Mammary epithelial cell (primary cell): ENCODE measurements at regions of chr6 and their contacts with region 1.

Region 1: DNA sequence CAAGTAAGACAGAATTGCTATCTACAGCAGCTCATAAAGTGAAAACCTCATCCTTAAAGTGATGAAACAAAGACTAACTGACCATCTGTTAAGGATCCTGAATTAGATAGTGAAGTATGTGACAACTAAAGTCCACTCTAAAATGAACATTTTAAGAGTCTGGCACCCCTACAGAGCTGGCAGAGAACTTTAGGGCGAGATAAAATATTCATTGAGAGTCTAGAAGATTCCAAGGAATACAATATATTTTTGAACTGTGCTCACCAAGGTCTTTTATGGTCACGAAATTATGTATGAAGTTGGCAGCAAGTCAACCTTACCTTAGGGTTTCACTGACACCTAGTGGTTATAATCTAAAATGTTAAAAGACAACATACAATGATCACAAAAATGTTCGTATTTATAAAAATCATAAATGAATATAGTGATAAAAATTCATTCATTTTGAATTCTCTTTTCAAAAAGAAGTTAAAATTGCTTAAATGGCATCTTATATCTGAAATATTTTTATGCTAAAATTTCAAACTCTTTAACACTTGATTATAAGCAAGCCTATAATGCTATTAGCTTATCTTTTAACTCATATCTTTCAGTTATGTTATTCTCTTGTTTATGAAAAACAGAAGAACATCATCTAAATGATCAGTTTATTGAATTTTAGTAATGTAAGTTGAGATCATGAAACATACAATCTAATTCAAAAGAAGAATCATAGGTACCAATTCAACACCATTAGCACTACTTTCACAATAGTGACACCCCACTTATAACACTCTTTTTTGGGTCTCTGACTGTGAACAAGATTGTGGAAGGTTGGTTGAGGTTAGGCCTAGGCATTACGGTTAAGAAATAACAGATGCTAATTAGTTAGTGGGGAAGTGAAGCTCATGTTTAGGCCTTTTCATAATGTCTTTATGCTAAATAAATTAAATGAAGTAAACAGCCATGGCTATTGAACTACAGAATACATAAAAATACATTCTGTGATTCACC is 27.5 kb downstream of the RSPH3 start:
- DNase-seq: peak; percentile 50
- H3K4me3 ChIP-seq: no peak overlapping the region
- H3K27ac ChIP-seq: peak overlapping the region; percentile 49
- H3K4me1 ChIP-seq: no peaks in the 10 kb centered on the region
- H3K27me3 ChIP-seq: no peaks in the 10 kb centered on the region
- CTCF ChIP-seq: peak; percentile 39 to 43

Region 2: DNA sequence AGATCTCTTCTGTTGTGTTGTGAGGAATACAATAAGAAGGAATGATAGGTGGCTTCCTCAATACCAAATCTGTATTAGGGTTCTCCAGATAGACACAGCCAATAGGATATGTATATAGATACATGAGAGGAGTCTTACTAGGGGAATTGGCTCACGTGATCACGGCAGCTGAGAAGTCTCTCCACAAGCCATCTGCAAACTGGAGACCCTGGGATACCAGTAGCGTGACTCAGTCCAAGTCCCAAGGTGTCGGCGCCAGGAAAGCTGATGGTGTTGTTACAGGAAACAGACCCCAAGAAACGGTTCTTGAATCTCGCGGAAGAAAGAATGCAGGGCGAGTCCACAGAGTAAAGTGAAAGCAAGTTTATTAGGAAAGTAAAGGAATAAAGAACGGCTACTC is 261.3 kb before region 1 on chr6:
- CTCF ChIA-PET with region 1: no interaction called
- dilution Hi-C with region 1: loop called (anchors 5 kb)
- in situ Hi-C with region 1: loop called (anchors 5 kb)
- intact Hi-C with region 1: no loop called
- DNase-seq: no peak
- H3K4me3 ChIP-seq: no peak overlapping the region
- H3K27ac ChIP-seq: no peak overlapping the region
- H3K4me1 ChIP-seq: peaks cover 23% of the 10 kb centered on the region
- H3K27me3 ChIP-seq: no peaks in the 10 kb centered on the region
- CTCF ChIP-seq: no peak

Region 3: DNA sequence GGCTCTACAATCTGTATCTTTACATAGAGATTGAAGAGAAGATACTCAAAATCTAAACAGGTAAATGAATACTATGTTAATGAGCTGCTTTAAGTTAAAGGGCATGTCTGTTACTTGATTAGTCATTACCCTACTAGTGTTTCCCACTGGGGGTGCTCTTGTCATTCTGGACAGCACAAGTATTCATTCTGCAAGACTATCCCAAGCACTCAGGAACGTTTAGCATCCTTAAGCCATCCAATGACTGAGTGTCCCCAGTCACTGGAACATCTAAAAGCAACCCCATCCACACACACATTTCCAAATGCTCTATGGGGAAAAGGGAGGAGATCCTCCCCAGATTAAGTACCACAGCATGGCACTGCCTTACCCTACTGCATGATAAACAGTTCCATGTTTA is 179.1 kb before region 1 on chr6:
- CTCF ChIA-PET with region 1: no interaction called
- dilution Hi-C with region 1: no loop called
- in situ Hi-C with region 1: loop called (anchors 10 kb)
- intact Hi-C with region 1: loop called (anchors 1 kb)
- DNase-seq: no peak
- H3K4me3 ChIP-seq: no peak overlapping the region
- H3K27ac ChIP-seq: no peak overlapping the region
- H3K4me1 ChIP-seq: peaks cover 19% of the 10 kb centered on the region
- H3K27me3 ChIP-seq: no peaks in the 10 kb centered on the region
- CTCF ChIP-seq: peak; percentile 51 to 61

Region 4: DNA sequence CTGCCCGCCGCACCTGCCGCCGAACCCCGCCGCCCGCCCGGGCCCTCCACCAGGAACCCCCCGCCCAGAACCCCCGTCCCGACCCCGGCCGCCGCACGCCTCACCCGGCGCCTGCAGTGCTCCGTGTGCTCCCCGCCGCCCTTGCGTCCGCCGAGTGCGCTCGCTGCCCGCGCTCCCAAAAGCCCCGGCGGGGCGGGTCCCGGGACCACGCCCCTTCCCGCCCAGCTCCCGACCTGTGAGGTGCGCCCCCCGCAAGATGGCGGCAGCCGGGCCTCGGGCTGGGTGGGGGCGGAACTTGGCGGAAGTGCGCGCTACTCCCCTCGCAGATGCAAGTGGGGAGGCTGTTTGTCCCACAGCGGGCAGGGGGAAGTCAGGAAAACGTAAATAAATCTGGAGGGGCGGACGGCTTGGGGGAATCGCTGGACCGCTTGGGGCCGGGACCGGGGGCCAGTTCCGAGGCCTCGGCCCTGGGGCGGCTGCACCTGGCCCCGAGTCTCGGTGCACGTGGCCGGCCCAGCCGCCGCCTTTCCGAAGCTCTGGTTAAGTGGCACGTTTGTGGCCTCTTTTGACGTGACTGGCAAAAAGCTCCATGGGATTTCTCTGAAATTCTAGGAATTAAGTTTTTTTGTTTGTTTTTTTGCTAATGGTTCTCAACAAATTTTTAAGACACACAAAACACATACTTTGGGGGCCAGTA is 153.2 kb before region 1 on chr6 and contains the start of gene EZR:
- CTCF ChIA-PET with region 1: no interaction called
- dilution Hi-C with region 1: no loop called
- in situ Hi-C with region 1: no loop called
- intact Hi-C with region 1: loop called (anchors 1 kb)
- DNase-seq: peak; percentile 76
- H3K4me3 ChIP-seq: peak within 1 kb of the TSS; percentile 80 to 87 (median 80)
- H3K27ac ChIP-seq: peak within 1 kb of the TSS; percentile 96
- H3K4me1 ChIP-seq: peaks cover 21% of the 10 kb centered on the region
- H3K27me3 ChIP-seq: no peaks in the 10 kb centered on the region
- CTCF ChIP-seq: no peak
- total RNA-seq, gene EZR: 164 to 240 TPM

Region 5: DNA sequence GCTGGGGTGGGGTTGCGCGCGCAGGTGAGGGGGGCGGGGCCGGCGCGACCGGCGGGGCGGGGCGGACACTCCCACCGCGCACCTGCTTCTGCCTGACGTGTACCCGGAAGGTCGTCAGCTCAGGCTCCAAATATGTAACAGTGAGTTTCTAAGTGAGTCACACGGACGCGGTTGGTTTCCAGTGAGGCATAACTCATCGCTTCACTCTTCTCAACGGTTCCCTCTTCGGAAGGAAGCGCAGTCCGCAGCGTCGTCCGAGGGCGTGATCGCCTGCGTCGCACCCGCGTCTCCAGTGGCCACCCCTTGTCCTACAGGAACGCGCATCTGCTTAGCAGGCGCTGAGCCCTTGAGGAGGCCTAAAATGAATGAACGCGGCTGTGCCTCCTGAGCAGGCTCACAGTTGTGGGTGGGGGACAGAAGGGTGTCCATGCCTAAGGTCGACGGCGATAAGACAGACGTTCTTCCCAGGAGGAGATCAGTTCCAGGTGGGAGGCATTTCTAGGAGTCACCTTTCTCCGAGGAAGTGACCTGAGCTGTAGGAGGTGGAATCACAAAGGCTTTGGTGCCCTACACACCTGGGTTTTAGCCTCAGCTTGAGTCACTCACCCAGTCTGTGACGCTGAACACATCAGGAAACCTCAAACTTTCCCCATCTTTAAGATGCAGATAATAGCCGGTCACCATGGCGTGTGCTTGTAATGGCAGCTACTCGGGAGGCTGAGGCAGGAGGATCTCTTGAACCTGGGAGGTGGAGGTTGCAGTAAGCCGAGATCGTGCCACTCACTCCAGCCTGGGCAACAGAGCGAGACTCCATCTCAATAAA is 102.5 kb before region 1 on chr6:
- CTCF ChIA-PET with region 1: no interaction called
- dilution Hi-C with region 1: no loop called
- in situ Hi-C with region 1: no loop called
- intact Hi-C with region 1: loop called (anchors 1 kb)
- DNase-seq: peak; percentile 99
- H3K4me3 ChIP-seq: peak overlapping the region in 2 of 3 experiments; percentile 35 to 41
- H3K27ac ChIP-seq: peak overlapping the region; percentile 100
- H3K4me1 ChIP-seq: peaks cover 16% of the 10 kb centered on the region
- H3K27me3 ChIP-seq: no peaks in the 10 kb centered on the region
- CTCF ChIP-seq: peak in 1 of 2 donors; percentile 50

Region 6: DNA sequence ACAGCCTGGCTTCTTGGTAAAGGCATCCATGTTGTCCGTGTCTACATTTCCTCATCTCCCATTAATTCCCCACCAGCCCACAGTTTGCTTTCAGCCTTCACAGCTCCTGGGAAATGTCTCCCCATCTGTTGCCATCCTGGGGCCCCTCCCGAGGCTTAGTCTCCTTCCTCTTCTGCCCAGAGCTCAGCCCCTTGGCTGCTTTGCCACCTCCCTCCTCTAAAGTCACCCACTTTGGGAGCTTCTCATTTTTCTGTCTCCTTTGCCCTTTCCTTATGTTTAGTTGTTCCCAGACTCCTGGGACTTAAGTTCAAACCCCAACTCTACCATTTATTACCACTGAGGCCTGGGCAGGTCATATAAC is 60.4 kb before region 1 on chr6:
- CTCF ChIA-PET with region 1: no interaction called
- dilution Hi-C with region 1: no loop called
- in situ Hi-C with region 1: no loop called
- intact Hi-C with region 1: no loop called
- DNase-seq: no peak
- H3K4me3 ChIP-seq: no peak overlapping the region
- H3K27ac ChIP-seq: no peak overlapping the region
- H3K4me1 ChIP-seq: peaks cover 17% of the 10 kb centered on the region
- H3K27me3 ChIP-seq: no peaks in the 10 kb centered on the region
- CTCF ChIP-seq: no peak

Region 7: GRCh38 chr6:158938811-158939254 is 33.7 kb before region 1 on chr6:
- CTCF ChIA-PET with region 1: no interaction called
- dilution Hi-C with region 1: no loop called
- in situ Hi-C with region 1: no loop called
- intact Hi-C with region 1: no loop called
- DNase-seq: no peak
- H3K4me3 ChIP-seq: no peak overlapping the region
- H3K27ac ChIP-seq: no peak overlapping the region
- H3K4me1 ChIP-seq: no peaks in the 10 kb centered on the region
- H3K27me3 ChIP-seq: no peaks in the 10 kb centered on the region
- CTCF ChIP-seq: no peak